ENCODE measurements at regions of chr11 and their contacts with region 1.

Region 1: GRCh38 chr11:121655537-121656327 is 203.0 kb upstream of the SORL1-AS1 start:
- DNase-seq: peak; percentile 88 to 96 (median 95)
- ATAC-seq: peak; percentile 96 to 97
- H3K4me3 ChIP-seq: peak overlapping the region; percentile 48
- H3K27ac ChIP-seq: peak overlapping the region; percentile 93
- H3K4me1 ChIP-seq: peaks cover 1% of the 10 kb centered on the region
- H3K27me3 ChIP-seq: no peaks in the 10 kb centered on the region

Region 2: DNA sequence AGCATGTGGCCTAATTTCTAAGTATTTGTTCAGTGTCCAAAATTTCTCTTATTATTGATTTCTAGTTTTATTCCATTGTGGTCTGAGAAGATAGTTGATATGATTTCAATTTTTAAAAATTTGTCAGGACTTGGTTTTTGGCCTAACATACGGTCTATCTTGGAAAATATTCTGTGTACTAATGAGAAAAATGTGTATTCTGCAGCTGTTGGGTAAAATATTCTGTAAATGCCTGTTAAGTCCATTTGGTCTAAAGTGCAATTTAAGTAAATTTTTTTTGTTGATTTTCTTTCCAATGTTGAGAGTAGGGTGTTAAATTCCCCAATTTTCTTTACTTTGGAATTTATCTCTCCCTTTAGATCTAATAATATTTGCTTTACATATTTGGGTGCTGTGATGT is 476.4 kb before region 1 on chr11:
- intact Hi-C with region 1: no loop called
- DNase-seq: no peak
- ATAC-seq: no peak
- H3K4me3 ChIP-seq: no peak overlapping the region
- H3K27ac ChIP-seq: no peak overlapping the region
- H3K4me1 ChIP-seq: no peaks in the 10 kb centered on the region
- H3K27me3 ChIP-seq: no peaks in the 10 kb centered on the region

Region 3: GRCh38 chr11:121671283-121672168 is 15.8 kb after region 1 on chr11:
- intact Hi-C with region 1: no loop called
- DNase-seq: peak in 1 of 3 donors; percentile 57
- ATAC-seq: peak; percentile 53 to 66
- H3K4me3 ChIP-seq: no peak overlapping the region
- H3K27ac ChIP-seq: peak overlapping the region; percentile 62
- H3K4me1 ChIP-seq: peaks cover 5% of the 10 kb centered on the region
- H3K27me3 ChIP-seq: no peaks in the 10 kb centered on the region

Region 4: GRCh38 chr11:121741761-121742361 is 86.1 kb after region 1 on chr11:
- intact Hi-C with region 1: loop called in 1 of 4 experiments (anchors 5 kb)
- DNase-seq: peak; percentile 90 to 94 (median 92)
- ATAC-seq: peak; percentile 97 to 98
- H3K4me3 ChIP-seq: no peak overlapping the region
- H3K27ac ChIP-seq: peak overlapping the region; percentile 61
- H3K4me1 ChIP-seq: peaks cover 2% of the 10 kb centered on the region
- H3K27me3 ChIP-seq: no peaks in the 10 kb centered on the region

Region 5: DNA sequence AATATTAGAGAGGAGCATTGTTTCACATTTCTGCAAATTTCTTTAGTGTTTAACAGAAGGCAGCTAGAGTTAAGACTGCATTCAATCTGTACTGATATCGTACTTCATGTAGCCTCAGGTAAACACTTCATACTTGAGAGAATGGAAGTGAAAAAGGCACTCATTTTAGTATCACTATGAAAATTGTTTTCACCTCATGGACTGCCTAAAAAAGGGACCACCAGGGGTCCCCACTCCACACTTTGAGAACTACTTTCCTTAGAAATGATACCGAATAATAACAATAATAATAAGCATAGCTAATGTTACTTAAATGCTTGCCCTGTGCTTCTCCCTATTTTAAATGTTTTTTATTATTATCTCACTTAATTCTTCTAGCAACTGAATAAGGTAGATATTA is 365.2 kb after region 1 on chr11:
- intact Hi-C with region 1: loop called in 2 of 4 experiments (anchors 5 to 10 kb)
- DNase-seq: peak in 1 of 3 donors; percentile 68
- ATAC-seq: no peak
- H3K4me3 ChIP-seq: no peak overlapping the region
- H3K27ac ChIP-seq: no peak overlapping the region
- H3K4me1 ChIP-seq: no peaks in the 10 kb centered on the region
- H3K27me3 ChIP-seq: no peaks in the 10 kb centered on the region

Region 6: DNA sequence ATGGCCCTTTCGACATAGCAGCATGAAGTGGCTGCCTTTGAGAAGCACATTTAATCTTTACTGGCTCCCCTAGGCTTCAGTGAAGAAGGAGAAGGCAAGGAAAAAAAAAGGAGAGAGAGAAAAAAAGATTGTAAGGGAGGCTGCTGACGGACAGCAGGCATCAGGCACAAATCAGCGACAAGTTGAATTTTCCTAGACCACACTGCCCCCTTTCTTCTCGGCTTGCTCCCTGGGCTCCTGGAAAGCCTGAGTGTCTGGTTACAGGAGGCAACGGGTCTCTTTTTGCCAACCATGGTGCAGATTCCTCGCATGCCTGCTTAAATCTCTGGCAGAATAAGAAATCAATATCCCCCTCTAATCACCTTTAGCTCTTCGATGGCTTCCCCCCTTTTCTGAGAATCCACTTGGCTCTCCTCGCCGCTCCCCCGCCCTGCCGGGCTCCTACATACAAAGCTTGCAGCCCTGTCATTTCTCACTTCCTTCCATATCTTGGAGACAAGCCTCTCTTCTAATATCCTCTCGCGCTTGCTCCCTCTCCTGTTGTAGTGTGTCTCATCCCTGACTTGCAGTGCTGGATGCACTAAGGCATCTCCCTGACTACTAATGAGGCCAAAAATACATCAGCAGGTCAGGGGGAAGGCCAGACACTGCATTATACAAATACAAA is 446.0 kb after region 1 on chr11:
- intact Hi-C with region 1: loop called (anchors 2 to 5 kb)
- DNase-seq: peak; percentile 61 to 84 (median 82)
- ATAC-seq: peak; percentile 86 to 91
- H3K4me3 ChIP-seq: peak overlapping the region; percentile 91
- H3K27ac ChIP-seq: peak overlapping the region; percentile 98
- H3K4me1 ChIP-seq: no peaks in the 10 kb centered on the region
- H3K27me3 ChIP-seq: no peaks in the 10 kb centered on the region

Region 7: GRCh38 chr11:122202951-122203456 is 547.3 kb after region 1 on chr11:
- intact Hi-C with region 1: loop called (anchors 5 kb)
- DNase-seq: peak; percentile 64 to 87 (median 84)
- ATAC-seq: peak; percentile 82 to 85
- H3K4me3 ChIP-seq: peak overlapping the region; percentile 12
- H3K27ac ChIP-seq: peak overlapping the region; percentile 2
- H3K4me1 ChIP-seq: peaks cover 11% of the 10 kb centered on the region
- H3K27me3 ChIP-seq: no peaks in the 10 kb centered on the region

Region 8: GRCh38 chr11:122367809-122368231 is 712.1 kb after region 1 on chr11:
- intact Hi-C with region 1: loop called in 1 of 4 experiments (anchors 10 kb)
- DNase-seq: peak; percentile 41 to 75 (median 44)
- ATAC-seq: peak; percentile 89 to 92
- H3K4me3 ChIP-seq: peak overlapping the region; percentile 30
- H3K27ac ChIP-seq: peak overlapping the region; percentile 62
- H3K4me1 ChIP-seq: no peaks in the 10 kb centered on the region
- H3K27me3 ChIP-seq: no peaks in the 10 kb centered on the region